Left ventricle myocardium inferior (tissue), 1 donor: ENCODE measurements at regions of chr20 and their contacts with region 1.

Region 1: DNA sequence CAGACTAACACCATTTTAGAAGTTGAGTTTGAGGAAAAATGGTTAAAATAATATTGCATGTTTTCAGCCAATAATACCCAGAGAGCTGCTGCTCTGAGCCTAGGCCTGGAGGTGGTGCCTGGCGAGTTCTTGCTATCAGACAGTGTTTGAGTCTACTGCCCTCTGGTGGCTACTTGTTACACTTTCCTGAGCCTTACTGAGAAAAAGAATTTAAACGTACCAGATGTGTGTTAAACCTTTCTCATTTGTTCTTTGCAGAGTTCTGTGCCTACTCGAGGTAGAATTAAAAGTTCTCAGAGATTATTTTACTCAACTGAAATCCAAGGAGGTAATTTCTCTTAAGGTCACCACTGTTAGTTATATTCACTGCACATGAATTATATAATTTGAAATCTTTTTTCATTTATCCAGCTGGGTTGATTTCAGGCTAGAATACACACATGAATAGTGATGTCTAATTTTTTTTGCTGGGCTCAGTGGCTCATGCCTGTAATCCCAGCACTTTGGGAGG is 38.2 kb downstream of the SHLD1 start:
- DNase-seq: peak; percentile 55
- H3K4me3 ChIP-seq: no peak overlapping the region
- H3K27ac ChIP-seq: no peak overlapping the region
- H3K4me1 ChIP-seq: peaks cover 26% of the 10 kb centered on the region
- H3K27me3 ChIP-seq: no peaks in the 10 kb centered on the region
- CTCF ChIP-seq: peak; percentile 96

Region 2: DNA sequence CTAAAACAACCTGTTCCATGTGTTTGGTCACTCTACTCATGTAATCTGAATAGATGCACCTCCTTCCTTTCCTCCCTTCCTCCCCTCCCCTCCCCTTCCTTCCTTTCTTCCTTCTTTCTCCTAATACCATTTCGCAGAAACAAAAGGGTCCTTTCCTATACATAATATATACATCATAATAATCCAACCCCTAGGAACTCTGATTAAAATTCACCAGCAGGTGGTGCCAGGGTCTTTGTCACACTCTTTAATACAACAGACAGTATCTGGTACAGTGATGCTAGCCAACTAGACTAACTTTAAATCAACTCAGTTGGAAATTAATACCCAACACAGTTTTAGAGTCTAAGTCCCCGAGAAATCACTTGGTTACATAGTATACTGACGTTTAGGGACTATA is 219.4 kb before region 1 on chr20:
- intact Hi-C with region 1: loop called (anchors 5 kb)
- DNase-seq: no peak
- H3K4me3 ChIP-seq: no peak overlapping the region
- H3K27ac ChIP-seq: no peak overlapping the region
- H3K4me1 ChIP-seq: peaks cover 9% of the 10 kb centered on the region
- H3K27me3 ChIP-seq: no peaks in the 10 kb centered on the region
- CTCF ChIP-seq: peak; percentile 63